ENCODE measurements at regions of chr11 and their contacts with region 1.

Region 1: DNA sequence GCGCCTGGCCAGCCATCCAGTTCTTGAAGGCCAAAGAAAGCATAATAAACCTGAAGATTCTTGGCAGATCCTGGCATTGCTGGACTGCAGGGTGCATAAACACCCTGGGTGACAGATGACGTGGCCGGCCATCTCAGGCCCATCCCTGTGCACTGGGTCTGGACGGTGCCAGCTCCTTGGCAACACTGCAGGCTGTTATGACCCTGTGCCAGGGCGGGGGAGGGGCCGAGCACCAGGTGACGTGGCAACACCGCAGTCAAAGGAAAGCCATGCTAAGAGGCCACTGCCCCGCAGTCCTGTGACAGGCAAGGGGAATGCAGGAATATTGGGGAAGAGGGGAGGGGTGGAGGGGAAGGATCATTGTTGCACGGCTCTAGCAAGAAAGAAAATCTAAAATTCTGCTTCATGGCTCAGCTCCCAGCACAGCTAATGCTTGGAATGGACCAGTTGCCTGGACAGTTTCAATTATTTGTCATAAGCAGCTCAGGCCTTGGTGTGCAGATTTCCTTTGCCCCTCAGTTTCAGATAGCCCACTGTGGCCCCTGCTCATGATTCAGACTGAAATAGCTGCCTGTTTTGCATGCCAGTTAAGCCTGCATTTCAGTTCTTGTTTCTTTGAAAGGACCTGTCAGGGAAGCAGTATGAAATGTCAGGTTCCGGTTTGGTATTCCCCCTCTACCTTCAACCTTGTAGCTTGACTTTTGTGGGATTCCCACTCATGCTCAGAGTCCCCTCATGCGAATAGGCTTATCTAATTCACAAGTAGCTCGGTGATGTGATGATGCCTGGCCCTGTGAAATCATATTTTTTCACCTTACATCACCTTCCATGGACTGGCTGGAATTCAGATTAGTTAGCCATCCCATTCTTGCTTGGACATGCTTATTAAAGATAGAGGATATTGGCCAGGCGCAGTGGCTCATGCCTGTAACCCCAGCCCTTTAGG is 29.7 kb upstream of the DDX6 start:
- DNase-seq: peak; percentile 93
- ATAC-seq: peak; percentile 86
- H3K4me3 ChIP-seq: peak overlapping the region in 4 of 5 experiments; percentile 5 to 39 (median 21)
- H3K4me3 Mint-ChIP-seq: peak overlapping the region; percentile 77
- H3K27ac ChIP-seq: peak overlapping the region; percentile 95 to 99
- H3K27ac Mint-ChIP-seq: peak overlapping the region; percentile 98
- H3K4me1 ChIP-seq: peaks cover 67% of the 10 kb centered on the region in 2 donors
- H3K4me1 Mint-ChIP-seq: peaks cover 58% of the 10 kb centered on the region
- H3K27me3 ChIP-seq: no peaks in the 10 kb centered on the region
- H3K27me3 Mint-ChIP-seq: no peaks in the 10 kb centered on the region
- CTCF ChIP-seq: no peak

Region 2: GRCh38 chr11:118807800-118808778 is 12.6 kb before region 1 on chr11:
- CTCF ChIA-PET with region 1: interaction called, 19 read pairs
- POLR2A ChIA-PET with region 1: interaction called, 4 read pairs
- intact Hi-C with region 1: no loop called
- DNase-seq: no peak
- ATAC-seq: peak; percentile 57
- H3K4me3 ChIP-seq: no peak overlapping the region
- H3K4me3 Mint-ChIP-seq: peak overlapping the region; percentile 75
- H3K27ac ChIP-seq: peak overlapping the region; percentile 5 to 61
- H3K27ac Mint-ChIP-seq: peak overlapping the region; percentile 91
- H3K4me1 ChIP-seq: peaks cover 47 to 49% of the 10 kb centered on the region in 2 donors
- H3K4me1 Mint-ChIP-seq: peaks cover 70% of the 10 kb centered on the region
- H3K27me3 ChIP-seq: no peaks in the 10 kb centered on the region
- H3K27me3 Mint-ChIP-seq: no peaks in the 10 kb centered on the region
- CTCF ChIP-seq: no peak

Region 3: GRCh38 chr11:118838905-118839553 is 18.3 kb after region 1 on chr11:
- CTCF ChIA-PET with region 1: interaction called, 8 read pairs
- POLR2A ChIA-PET with region 1: interaction called, 8 read pairs
- intact Hi-C with region 1: loop called (anchors 1 kb)
- DNase-seq: peak; percentile 72
- ATAC-seq: peak; percentile 85
- H3K4me3 ChIP-seq: no peak overlapping the region
- H3K4me3 Mint-ChIP-seq: peak overlapping the region; percentile 71
- H3K27ac ChIP-seq: peak overlapping the region; percentile 25 to 44
- H3K27ac Mint-ChIP-seq: peak overlapping the region; percentile 79
- H3K4me1 ChIP-seq: peaks cover 27 to 40% of the 10 kb centered on the region in 2 donors
- H3K4me1 Mint-ChIP-seq: peaks cover 41% of the 10 kb centered on the region
- H3K27me3 ChIP-seq: no peaks in the 10 kb centered on the region
- H3K27me3 Mint-ChIP-seq: no peaks in the 10 kb centered on the region
- CTCF ChIP-seq: no peak

Region 4: DNA sequence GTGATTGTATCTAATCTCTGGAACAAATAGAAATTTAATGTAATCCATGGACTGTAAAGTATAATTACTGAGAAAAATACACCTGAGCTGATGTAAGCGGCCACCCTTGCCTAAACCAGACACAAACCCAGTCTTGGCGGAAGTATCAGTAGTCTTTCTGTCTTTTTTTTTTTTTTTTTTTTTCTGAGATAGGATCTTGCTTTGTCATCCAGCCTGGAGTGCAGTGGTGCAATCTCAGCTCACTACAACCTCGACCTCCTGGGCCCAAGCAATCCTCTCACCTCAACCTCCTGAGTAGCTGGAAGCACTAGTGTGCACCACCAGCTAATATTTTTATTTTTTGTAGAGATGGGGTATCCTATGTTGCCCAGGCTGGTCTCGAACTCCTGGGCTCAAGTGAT is 57.5 kb after region 1 on chr11:
- CTCF ChIA-PET with region 1: interaction called, 9 read pairs
- POLR2A ChIA-PET with region 1: interaction called, 39 read pairs
- intact Hi-C with region 1: loop called (anchors 1 kb)
- DNase-seq: peak; percentile 31
- ATAC-seq: no peak
- H3K4me3 ChIP-seq: no peak overlapping the region
- H3K4me3 Mint-ChIP-seq: no peak overlapping the region
- H3K27ac ChIP-seq: peak overlapping the region; percentile 79 to 93
- H3K27ac Mint-ChIP-seq: peak overlapping the region; percentile 72
- H3K4me1 ChIP-seq: peaks cover 67% of the 10 kb centered on the region in 2 donors
- H3K4me1 Mint-ChIP-seq: peaks cover 75% of the 10 kb centered on the region
- H3K27me3 ChIP-seq: no peaks in the 10 kb centered on the region
- H3K27me3 Mint-ChIP-seq: no peaks in the 10 kb centered on the region
- CTCF ChIP-seq: no peak